AG04450 (cell line): ENCODE measurements at regions of chr17 and their contacts with region 1.

Region 1: GRCh38 chr17:80455336-80455710 is 21.1 kb downstream of the NPTX1 start:
- DNase-seq: no peak
- H3K4me3 ChIP-seq: peak overlapping the region; percentile 72
- H3K27ac ChIP-seq: peak overlapping the region; percentile 93
- H3K27me3 ChIP-seq: peaks cover 17% of the 10 kb centered on the region
- CTCF ChIP-seq: no peak

Region 2: DNA sequence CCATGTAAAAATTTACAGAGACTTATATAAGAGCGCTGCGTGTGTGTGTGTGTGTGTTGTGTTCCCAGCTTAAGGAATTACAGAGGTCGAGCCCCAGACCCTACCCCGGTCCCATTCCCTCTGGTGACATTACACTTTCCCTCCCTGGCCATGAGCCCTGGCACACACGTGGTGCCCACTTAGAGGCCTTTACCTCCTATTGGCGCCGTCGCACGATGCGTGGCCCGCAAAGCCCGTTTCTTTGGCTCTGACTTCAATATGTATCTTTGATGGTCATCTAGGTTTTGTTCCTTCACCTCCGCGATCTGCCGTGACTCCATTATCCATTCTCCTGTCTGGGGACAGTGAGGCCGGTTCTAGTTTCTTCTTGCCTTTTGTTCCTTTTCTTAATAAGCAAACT is 439.4 kb after region 1 on chr17:
- CTCF ChIA-PET with region 1: interaction called, 12 read pairs
- POLR2A ChIA-PET with region 1: no interaction called
- DNase-seq: no peak
- H3K4me3 ChIP-seq: no peak overlapping the region
- H3K27ac ChIP-seq: no peak overlapping the region
- H3K27me3 ChIP-seq: no peaks in the 10 kb centered on the region
- CTCF ChIP-seq: no peak